AG04449 (cell line): ENCODE measurements at regions of chr6 and their contacts with region 1.

Region 1: GRCh38 chr6:41591859-41592502 is 45.8 kb downstream of the FOXP4 start:
- DNase-seq: no peak
- H3K4me3 ChIP-seq: no peak overlapping the region
- CTCF ChIP-seq: peak; percentile 86

Region 2: GRCh38 chr6:41463062-41463930 is 128.7 kb before region 1 on chr6:
- CTCF ChIA-PET with region 1: interaction called, 76 read pairs
- POLR2A ChIA-PET with region 1: no interaction called
- DNase-seq: no peak
- H3K4me3 ChIP-seq: no peak overlapping the region
- CTCF ChIP-seq: peak; percentile 59

Region 3: GRCh38 chr6:41581381-41581991 is 10.5 kb before region 1 on chr6:
- CTCF ChIA-PET with region 1: interaction called, 38 read pairs
- POLR2A ChIA-PET with region 1: no interaction called
- DNase-seq: no peak
- H3K4me3 ChIP-seq: no peak overlapping the region
- CTCF ChIP-seq: no peak

Region 4: GRCh38 chr6:41677124-41677921 is 85.3 kb after region 1 on chr6:
- CTCF ChIA-PET with region 1: interaction called, 11 read pairs
- POLR2A ChIA-PET with region 1: no interaction called
- DNase-seq: no peak
- H3K4me3 ChIP-seq: no peak overlapping the region
- CTCF ChIP-seq: no peak